ENCODE measurements at regions of chr2 and their contacts with region 1.

Region 1: GRCh38 chr2:207143215-207144172 is 22.3 kb downstream of the KLF7 start:
- DNase-seq: peak; percentile 71 to 85 (median 78)
- ATAC-seq: peak; percentile 80 to 92 (median 83)
- H3K4me3 ChIP-seq: peak overlapping the region in 9 of 12 donors; percentile 10 to 41 (median 29)
- H3K27ac ChIP-seq: peak overlapping the region; percentile 77 to 96 (median 87)
- H3K4me1 ChIP-seq: peaks cover 33 to 100% (median 89%) of the 10 kb centered on the region in 12 donors
- H3K27me3 ChIP-seq: no peaks in the 10 kb centered on the region
- CTCF ChIP-seq: no peak
- POLR2A ChIP-seq: no peak

Region 2: GRCh38 chr2:207073801-207074678 is 69.5 kb before region 1 on chr2:
- intact Hi-C with region 1: loop called in 1 of 10 experiments (anchors 10 kb)
- DNase-seq: peak in 1 of 5 donors; percentile 29
- ATAC-seq: peak in 3 of 4 donors; percentile 61 to 79 (median 72)
- H3K4me3 ChIP-seq: peak overlapping the region in 5 of 12 donors; percentile 3 to 22 (median 4)
- H3K27ac ChIP-seq: peak overlapping the region in 11 of 12 donors; percentile 4 to 61 (median 44)
- H3K4me1 ChIP-seq: peaks cover 0 to 41% (median 23%) of the 10 kb centered on the region in 12 donors
- H3K27me3 ChIP-seq: no peaks in the 10 kb centered on the region
- CTCF ChIP-seq: peak in 3 of 12 donors; percentile 6 to 26 (median 23)
- POLR2A ChIP-seq: no peak

Region 3: GRCh38 chr2:207083361-207084110 is 60.0 kb before region 1 on chr2:
- intact Hi-C with region 1: loop called in 2 of 10 experiments (anchors 5 to 10 kb)
- DNase-seq: no peak
- ATAC-seq: peak in 2 of 4 donors; percentile 6 to 27
- H3K4me3 ChIP-seq: no peak overlapping the region
- H3K27ac ChIP-seq: peak overlapping the region in 10 of 12 donors; percentile 19 to 57 (median 44)
- H3K4me1 ChIP-seq: peaks cover 7 to 64% (median 50%) of the 10 kb centered on the region in 12 donors
- H3K27me3 ChIP-seq: no peaks in the 10 kb centered on the region
- CTCF ChIP-seq: no peak
- POLR2A ChIP-seq: no peak